CD4-positive, alpha-beta memory T cell (primary cell): ENCODE measurements at regions of chr6 and their contacts with region 1.

Region 1: GRCh38 chr6:33904050-33904746 is 100.4 kb upstream of the MLN start:
- DNase-seq: peak; percentile 76 to 84 (median 81)
- H3K4me3 ChIP-seq: peak overlapping the region; percentile 25 to 36
- H3K4me3 Mint-ChIP-seq: peak overlapping the region; percentile 62 to 83 (median 78)
- H3K27ac ChIP-seq: peak overlapping the region; percentile 51
- H3K27ac Mint-ChIP-seq: peak overlapping the region; percentile 84 to 94 (median 91)
- H3K4me1 ChIP-seq: peaks cover 64% of the 10 kb centered on the region
- H3K4me1 Mint-ChIP-seq: peaks cover 54 to 83% (median 69%) of the 10 kb centered on the region in 4 donors
- H3K27me3 ChIP-seq: no peaks in the 10 kb centered on the region
- H3K27me3 Mint-ChIP-seq: no peaks in the 10 kb centered on the region

Region 2: GRCh38 chr6:33744001-33744848 is 160.0 kb before region 1 on chr6:
- CTCF ChIA-PET with region 1: no interaction called
- POLR2A ChIA-PET with region 1: no interaction called
- intact Hi-C with region 1: no loop called
- DNase-seq: peak; percentile 57 to 68 (median 66)
- H3K4me3 ChIP-seq: no peak overlapping the region
- H3K4me3 Mint-ChIP-seq: no peak overlapping the region
- H3K27ac ChIP-seq: no peak overlapping the region
- H3K27ac Mint-ChIP-seq: no peak overlapping the region
- H3K4me1 ChIP-seq: no peaks in the 10 kb centered on the region
- H3K4me1 Mint-ChIP-seq: peaks cover 0 to 4% (median 3%) of the 10 kb centered on the region in 4 donors
- H3K27me3 ChIP-seq: peaks cover 7% of the 10 kb centered on the region
- H3K27me3 Mint-ChIP-seq: peaks cover 0 to 7% of the 10 kb centered on the region in 2 donors

Region 3: DNA sequence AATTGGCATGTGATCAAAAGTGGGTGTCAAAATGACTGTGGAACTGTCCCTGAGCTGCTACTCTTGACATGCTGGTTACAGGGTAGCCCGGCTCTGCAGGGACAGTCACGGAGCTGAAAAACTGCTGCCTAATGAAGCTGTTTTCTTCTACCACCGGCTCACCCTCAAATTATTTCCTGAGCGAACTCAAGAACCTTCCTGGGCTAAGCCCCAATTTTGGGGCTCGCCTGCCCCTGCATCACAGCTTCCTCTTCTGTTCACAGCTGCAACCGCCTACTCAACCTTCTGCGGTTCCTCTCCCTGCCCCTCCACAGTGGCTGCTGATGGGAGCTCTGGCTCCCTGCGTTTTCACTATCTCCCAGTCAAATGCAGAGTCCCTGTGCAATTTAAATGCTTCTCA is 10.4 kb after region 1 on chr6:
- CTCF ChIA-PET with region 1: interaction called, 13 read pairs
- POLR2A ChIA-PET with region 1: interaction called, 42 read pairs
- intact Hi-C with region 1: loop called (anchors 1 kb)
- DNase-seq: peak; percentile 43 to 63 (median 52)
- H3K4me3 ChIP-seq: peak overlapping the region in 1 of 2 donors; percentile 25
- H3K4me3 Mint-ChIP-seq: peak overlapping the region; percentile 53 to 86 (median 77)
- H3K27ac ChIP-seq: peak overlapping the region; percentile 35
- H3K27ac Mint-ChIP-seq: peak overlapping the region; percentile 74 to 97 (median 82)
- H3K4me1 ChIP-seq: peaks cover 39% of the 10 kb centered on the region
- H3K4me1 Mint-ChIP-seq: peaks cover 34 to 56% (median 50%) of the 10 kb centered on the region in 4 donors
- H3K27me3 ChIP-seq: no peaks in the 10 kb centered on the region
- H3K27me3 Mint-ChIP-seq: peaks cover 0 to 1% of the 10 kb centered on the region in 2 donors